ENCODE measurements at regions of chr6 and their contacts with region 1.

Region 1: DNA sequence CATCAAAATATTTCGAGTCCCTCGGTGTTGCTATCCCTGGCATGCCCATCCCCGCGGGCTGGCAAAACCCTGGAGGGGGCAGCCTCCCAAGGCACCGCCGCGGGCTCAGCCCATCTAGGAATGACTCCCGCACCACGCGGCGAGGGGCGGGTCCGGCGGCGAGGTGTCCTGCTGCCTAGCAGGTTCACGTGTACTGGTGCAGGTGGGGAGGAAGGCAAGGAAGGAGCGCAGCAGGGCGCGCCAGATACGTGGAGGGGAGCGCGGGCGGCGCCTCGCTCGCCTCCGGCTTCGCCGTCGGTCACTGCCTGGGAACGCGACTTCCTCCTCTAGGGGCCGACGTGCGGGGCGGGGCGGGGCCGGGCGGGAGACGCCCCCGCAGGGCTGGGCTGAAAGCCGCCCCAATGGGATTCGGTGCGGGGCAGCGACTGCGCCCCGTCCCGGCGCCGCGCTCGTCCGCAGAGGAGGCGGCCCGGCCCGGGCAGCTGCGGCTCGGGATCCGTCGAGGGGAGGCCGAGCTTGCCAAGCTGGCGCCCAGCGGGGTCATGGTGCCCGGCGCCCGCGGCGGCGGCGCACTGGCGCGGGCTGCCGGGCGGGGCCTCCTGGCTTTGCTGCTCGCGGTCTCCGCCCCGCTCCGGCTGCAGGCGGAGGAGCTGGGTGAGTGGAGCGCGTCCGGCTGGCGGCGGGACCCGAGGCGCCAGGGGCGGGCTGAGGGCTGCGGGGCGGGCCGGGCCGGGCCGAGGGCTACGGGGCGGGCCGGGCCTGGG is at the start of gene DCBLD1:
- DNase-seq: peak; percentile 84
- CTCF ChIP-seq: no peak

Region 2: DNA sequence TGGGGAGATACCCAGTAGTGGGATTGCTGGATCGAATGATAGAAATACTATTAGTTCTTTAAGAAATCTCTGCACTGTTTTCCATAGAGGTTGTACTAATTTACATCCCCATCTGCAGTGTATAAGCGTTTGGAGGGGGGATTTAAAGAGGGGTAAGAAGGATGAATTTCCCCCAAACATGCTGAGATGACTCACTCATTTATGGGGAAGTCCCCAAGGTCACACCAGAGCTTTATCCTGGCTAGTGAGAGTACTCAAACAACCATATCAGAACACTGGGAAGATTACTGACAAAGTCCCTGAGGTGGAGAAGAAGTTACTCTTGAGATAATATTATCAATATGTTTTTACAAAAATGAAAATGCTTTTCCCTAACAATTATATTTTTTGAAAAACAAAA is 100.7 kb before region 1 on chr6:
- CTCF ChIA-PET with region 1: no interaction called
- POLR2A ChIA-PET with region 1: no interaction called
- DNase-seq: no peak
- CTCF ChIP-seq: no peak

Region 3: GRCh38 chr6:117469356-117469755 is 13.1 kb before region 1 on chr6:
- CTCF ChIA-PET with region 1: interaction called, 13 read pairs
- POLR2A ChIA-PET with region 1: no interaction called
- DNase-seq: no peak
- CTCF ChIP-seq: no peak